Adrenal gland (tissue), 19 donors: ENCODE measurements at regions of chr18 and their contacts with region 1.

Region 1: DNA sequence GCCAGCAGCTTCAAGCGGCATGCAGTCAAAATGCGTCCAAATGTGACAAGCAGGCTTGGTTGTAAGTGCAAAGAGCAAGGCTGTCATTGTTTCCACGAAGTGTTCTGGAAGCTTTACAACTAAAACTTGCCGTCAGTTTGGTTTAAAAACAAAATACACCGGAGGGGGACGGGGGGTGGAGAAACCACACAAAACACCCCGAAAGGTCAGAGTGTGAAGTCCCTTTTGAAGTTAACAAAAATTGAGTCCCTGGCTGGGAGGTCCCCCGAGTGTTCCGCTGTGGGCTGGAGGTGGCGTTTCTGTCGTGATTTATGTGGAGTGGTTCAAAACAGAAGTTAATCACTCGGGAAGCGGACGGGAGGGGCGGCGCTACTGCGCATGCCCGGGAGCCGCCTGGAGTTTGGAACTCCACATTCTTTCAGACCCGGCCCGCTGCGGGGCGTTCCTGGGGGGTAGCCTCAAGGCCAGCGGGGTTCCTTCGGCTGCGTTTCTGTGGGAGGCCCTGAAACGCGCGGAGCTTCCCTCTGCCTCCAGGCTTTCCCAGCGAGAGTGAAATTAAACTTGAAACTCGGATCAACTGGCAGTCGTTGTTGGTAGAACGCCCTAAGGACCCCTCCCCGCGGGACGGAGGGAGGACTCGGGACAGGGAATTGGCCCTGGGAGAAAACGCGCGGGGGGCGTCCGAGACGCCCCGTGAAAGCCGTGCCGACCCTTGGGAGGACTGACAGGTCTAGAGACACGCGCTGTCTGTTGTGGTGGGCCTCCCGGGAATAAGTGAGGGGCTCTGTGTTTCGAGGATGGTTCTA is 1.4 kb downstream of the TGIF1 start:
- DNase-seq: peak; percentile 94 to 97 (median 96)
- H3K4me3 ChIP-seq: peak overlapping the region; percentile 50 to 95 (median 63)
- H3K27ac ChIP-seq: peak overlapping the region; percentile 80 to 99 (median 97)
- H3K4me1 ChIP-seq: peaks cover 20 to 36% of the 10 kb centered on the region in 2 donors
- H3K27me3 ChIP-seq: no peaks in the 10 kb centered on the region
- CTCF ChIP-seq: no peak
- POLR2A ChIP-seq: peak; percentile 49 to 94

Region 2: GRCh38 chr18:3261371-3262246 is 189.8 kb before region 1 on chr18 and contains the start of gene MYL12B:
- intact Hi-C with region 1: loop called in 1 of 2 experiments (anchors 10 kb)
- DNase-seq: peak; percentile 73 to 84 (median 81)
- H3K4me3 ChIP-seq: peak within 1 kb of the TSS; percentile 73 to 95 (median 85)
- H3K27ac ChIP-seq: peak within 1 kb of the TSS; percentile 82 to 98 (median 98)
- H3K4me1 ChIP-seq: peaks cover 44 to 55% of the 10 kb centered on the region in 2 donors
- H3K27me3 ChIP-seq: no peaks in the 10 kb centered on the region
- CTCF ChIP-seq: peak in 3 of 6 experiments; percentile 8 to 25 (median 23)
- POLR2A ChIP-seq: peak; percentile 74 to 80
- total RNA-seq, gene MYL12B: 259 to 762 (median 384) TPM

Region 3: GRCh38 chr18:3281456-3282400 is 169.7 kb before region 1 on chr18:
- intact Hi-C with region 1: loop called in 1 of 2 experiments (anchors 5 kb)
- DNase-seq: no peak
- H3K4me3 ChIP-seq: no peak overlapping the region
- H3K27ac ChIP-seq: no peak overlapping the region
- H3K4me1 ChIP-seq: peaks cover 5 to 7% of the 10 kb centered on the region in 2 donors
- H3K27me3 ChIP-seq: no peaks in the 10 kb centered on the region
- CTCF ChIP-seq: peak; percentile 59 to 92 (median 74)
- POLR2A ChIP-seq: no peak

Region 4: DNA sequence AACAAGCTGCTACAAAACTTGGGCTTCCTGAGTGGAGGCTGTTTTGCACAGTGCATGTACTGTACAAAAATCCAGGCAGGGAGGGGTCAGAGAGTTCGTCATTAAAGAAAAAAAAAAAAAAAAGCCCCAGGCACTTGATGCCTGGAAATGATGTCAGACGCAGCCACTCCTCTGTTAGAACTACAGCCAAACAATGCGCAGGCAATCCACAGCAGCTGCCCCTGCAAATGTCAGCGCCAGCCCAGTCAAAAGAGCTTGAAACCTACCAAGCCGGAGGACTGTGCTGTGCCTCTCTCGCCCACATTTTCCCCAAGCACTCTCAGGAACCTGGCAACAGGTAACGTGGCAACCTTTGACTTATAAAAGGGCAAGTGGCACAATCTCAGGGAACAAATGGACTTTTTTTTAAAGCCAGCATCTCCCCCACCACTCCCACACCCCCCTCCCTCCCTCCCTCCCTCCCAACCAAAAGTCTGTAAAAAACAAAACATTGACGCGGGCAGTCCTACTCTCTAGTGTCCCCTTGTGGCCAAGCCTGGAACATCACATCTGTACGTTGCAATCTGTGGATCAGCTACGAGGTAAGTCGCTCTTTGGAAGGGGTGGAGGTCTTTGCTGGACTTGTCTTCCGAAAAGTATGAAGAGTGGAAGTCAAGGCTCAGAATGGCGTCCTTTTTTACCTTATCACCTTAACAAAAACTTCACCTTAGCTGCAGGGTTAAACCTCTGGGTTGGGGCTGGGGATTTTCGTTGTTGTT is 142.7 kb after region 1 on chr18:
- intact Hi-C with region 1: loop called (anchors 5 kb)
- DNase-seq: peak; percentile 89 to 98 (median 95)
- H3K4me3 ChIP-seq: peak overlapping the region in 3 of 4 donors; percentile 1 to 59 (median 19)
- H3K27ac ChIP-seq: peak overlapping the region; percentile 93 to 98 (median 96)
- H3K4me1 ChIP-seq: peaks cover 45 to 51% of the 10 kb centered on the region in 2 donors
- H3K27me3 ChIP-seq: no peaks in the 10 kb centered on the region
- CTCF ChIP-seq: peak; percentile 84 to 94 (median 92)
- POLR2A ChIP-seq: peak; percentile 77 to 90

Region 5: GRCh38 chr18:3623769-3624545 is 172.6 kb after region 1 on chr18:
- intact Hi-C with region 1: no loop called
- DNase-seq: peak; percentile 47 to 91 (median 81)
- H3K4me3 ChIP-seq: no peak overlapping the region
- H3K27ac ChIP-seq: peak overlapping the region; percentile 51 to 96 (median 74)
- H3K4me1 ChIP-seq: peaks cover 9 to 33% of the 10 kb centered on the region in 2 donors
- H3K27me3 ChIP-seq: no peaks in the 10 kb centered on the region
- CTCF ChIP-seq: no peak
- POLR2A ChIP-seq: peak; percentile 22 to 38

Region 6: DNA sequence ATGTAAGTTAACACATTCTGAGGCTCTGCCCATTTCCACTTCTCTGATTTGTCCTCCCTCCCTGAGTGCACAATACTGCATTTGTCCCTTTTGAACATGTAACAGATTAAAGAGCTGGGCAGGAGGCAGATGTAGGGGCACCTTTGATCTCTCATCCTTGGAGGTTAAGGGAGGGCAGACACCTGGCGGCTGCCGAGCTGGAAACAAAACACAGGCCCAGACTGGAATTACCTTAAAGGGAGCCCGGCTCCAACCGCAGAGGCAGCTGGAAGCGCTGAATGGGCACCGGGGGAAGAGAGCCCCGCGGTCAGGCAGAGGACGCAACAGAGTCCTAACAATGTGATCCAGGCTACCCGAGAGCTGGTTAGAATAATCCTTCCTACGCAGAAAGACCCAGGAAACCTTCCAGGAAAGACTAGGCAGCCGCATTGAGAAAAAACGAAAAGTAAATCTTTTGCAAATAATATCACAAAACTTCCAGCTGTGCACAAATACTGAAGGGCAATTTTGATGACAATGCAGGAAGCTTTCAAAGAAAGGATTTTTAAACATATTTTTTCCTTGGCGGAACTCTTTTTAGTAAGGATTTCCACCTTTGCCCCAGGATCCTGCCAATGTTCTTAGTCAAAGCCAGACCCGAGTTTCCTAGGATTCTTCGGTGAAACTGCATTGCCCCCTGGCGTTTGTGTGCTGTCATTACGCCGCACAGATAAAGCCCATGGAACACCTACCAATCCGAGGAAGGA is 214.6 kb after region 1 on chr18:
- intact Hi-C with region 1: loop called in 1 of 2 experiments (anchors 10 kb)
- DNase-seq: peak; percentile 77 to 94 (median 87)
- H3K4me3 ChIP-seq: peak overlapping the region in 1 of 4 donors; percentile 14
- H3K27ac ChIP-seq: peak overlapping the region; percentile 33 to 85 (median 71)
- H3K4me1 ChIP-seq: peaks cover 7 to 13% of the 10 kb centered on the region in 2 donors
- H3K27me3 ChIP-seq: no peaks in the 10 kb centered on the region
- CTCF ChIP-seq: peak; percentile 90 to 98 (median 98)
- POLR2A ChIP-seq: peak in 1 of 2 donors; percentile 22